Transverse colon (tissue), 4 donors: ENCODE measurements at regions of chr10 and their contacts with region 1.

Region 1: DNA sequence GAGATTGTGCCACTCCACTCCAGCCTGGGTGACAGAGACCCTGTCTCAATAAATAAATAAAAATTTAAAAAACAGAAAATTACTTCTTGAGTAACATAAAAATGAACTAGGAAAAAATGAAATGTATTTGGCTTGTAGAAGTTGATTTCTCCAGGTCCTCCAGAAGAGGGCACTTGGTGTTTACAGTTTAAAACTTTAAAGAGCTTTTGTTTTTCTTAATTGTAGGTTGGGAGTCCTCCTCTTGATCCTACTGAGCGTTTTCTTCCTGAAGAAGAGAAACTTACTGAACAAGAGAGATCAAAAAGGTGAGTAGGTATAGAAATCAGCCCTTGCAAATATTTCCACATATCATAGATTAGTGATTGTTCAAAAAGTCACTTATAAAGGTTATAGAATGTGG is 16.2 kb downstream of the KIFBP start:
- DNase-seq: no peak
- H3K4me3 ChIP-seq: no peak overlapping the region
- H3K27ac ChIP-seq: no peak overlapping the region
- H3K4me1 ChIP-seq: peaks cover 0 to 8% (median 0%) of the 10 kb centered on the region in 4 donors
- H3K27me3 ChIP-seq: no peaks in the 10 kb centered on the region
- CTCF ChIP-seq: peak; percentile 26 to 41 (median 36)
- EP300 ChIP-seq: no peak
- POLR2A ChIP-seq: no peak

Region 2: DNA sequence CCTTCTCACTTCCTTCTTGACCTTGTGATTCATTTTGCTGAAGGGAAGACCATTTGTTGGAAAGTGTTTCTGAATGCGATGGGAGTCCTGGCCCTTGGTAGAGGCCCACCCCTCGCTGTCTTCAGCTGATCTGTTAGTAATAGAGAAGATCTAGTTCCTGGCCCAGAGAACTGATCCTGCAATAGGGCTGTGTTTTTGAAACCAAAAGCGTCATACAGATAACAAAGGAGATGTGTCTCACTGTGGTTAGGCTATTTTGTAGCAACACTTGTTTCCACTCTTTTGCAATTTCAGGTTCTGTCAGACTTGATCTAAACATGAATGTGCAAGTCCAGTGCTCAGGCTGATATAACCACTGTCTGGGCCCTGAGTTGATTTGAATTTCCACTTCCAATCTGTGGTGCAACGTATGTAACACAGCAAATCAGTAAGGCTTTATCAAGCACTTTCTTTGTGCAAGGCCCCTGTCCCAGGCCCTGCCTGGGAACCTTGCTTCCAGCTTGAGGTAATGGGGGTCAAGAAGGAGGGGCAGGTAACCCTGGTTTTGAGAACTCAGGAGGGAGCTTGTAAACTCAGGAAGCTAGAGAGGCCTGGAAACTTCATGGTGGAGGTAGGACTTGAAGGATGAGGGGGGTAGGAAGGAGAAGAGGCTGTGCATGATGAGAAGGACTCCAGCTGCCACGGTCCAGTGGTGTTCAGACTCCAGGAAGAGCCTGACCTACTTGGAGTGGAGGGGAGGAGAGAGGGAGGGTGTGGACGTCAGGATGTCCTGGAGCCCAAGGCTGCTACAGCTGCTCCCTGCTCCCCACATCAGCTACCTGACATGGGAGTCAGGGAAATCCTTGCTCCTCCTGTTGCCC is 40.9 kb after region 1 on chr10:
- in situ Hi-C with region 1: no loop called
- intact Hi-C with region 1: no loop called
- DNase-seq: no peak
- H3K4me3 ChIP-seq: no peak overlapping the region
- H3K27ac ChIP-seq: peak overlapping the region; percentile 46 to 75 (median 57)
- H3K4me1 ChIP-seq: peaks cover 0 to 3% (median 0%) of the 10 kb centered on the region in 4 donors
- H3K27me3 ChIP-seq: no peaks in the 10 kb centered on the region
- CTCF ChIP-seq: no peak
- EP300 ChIP-seq: no peak
- POLR2A ChIP-seq: no peak

Region 3: DNA sequence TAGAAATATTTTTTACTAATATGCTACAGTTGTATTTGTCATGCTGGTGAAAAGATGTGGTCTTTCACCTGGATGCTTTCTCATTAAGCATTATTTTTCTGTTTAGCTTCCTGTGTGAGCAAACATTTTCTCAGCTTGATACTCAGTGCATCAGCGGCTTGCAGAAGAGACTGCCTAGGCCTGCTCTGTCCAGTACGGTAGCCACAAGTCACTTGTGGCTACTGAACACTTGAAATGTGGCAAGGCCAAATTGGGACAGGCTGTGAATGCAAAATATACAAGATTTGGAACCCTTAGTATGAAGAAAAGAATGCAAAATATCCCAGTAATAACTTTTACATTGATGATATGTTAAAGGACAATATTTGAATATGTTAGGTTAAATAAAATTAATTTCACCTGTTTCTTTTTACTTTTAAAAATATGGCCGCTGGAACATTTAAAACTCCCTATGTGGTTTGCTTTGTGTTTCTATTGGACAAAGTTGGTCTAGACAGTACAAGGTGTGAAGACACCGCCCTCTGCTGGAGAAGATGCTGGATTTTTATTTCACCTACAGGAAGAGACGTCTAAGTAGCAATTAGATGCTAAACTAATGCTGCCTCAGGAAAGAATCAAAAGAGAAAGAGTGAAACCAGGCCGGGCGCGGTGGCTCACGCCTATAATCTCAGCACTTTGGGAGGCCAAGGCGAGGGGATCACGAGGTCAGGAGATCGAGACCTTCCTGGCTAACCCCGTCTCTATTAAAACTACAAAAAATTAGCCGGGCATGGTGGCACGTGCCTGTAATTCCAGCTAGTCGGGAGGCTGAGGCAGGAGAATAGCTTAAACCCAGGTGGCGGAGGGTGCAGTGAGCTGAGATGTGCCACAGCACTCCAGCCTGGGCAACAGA is 88.4 kb after region 1 on chr10:
- in situ Hi-C with region 1: loop called in 2 of 4 experiments (anchors 5 to 10 kb)
- intact Hi-C with region 1: loop called (anchors 10 kb)
- DNase-seq: peak; percentile 84
- H3K4me3 ChIP-seq: no peak overlapping the region
- H3K27ac ChIP-seq: peak overlapping the region in 1 of 4 donors; percentile 26
- H3K4me1 ChIP-seq: no peaks in the 10 kb centered on the region
- H3K27me3 ChIP-seq: no peaks in the 10 kb centered on the region
- CTCF ChIP-seq: peak; percentile 73 to 84 (median 81)
- EP300 ChIP-seq: no peak
- POLR2A ChIP-seq: no peak

Region 4: GRCh38 chr10:69123747-69124562 is 119.1 kb after region 1 on chr10 and contains the start of gene VPS26A:
- in situ Hi-C with region 1: loop called in 1 of 4 experiments (anchors 25 kb)
- intact Hi-C with region 1: no loop called
- DNase-seq: peak; percentile 99
- H3K4me3 ChIP-seq: peak within 1 kb of the TSS; percentile 74 to 98 (median 85)
- H3K27ac ChIP-seq: peak within 1 kb of the TSS; percentile 90 to 99 (median 93)
- H3K4me1 ChIP-seq: peaks cover 0 to 26% (median 15%) of the 10 kb centered on the region in 4 donors
- H3K27me3 ChIP-seq: no peaks in the 10 kb centered on the region
- CTCF ChIP-seq: peak in 1 of 5 experiments; percentile 27
- EP300 ChIP-seq: no peak
- POLR2A ChIP-seq: peak; percentile 98
- total RNA-seq, gene VPS26A: 5.4 to 38.7 (median 23.2) TPM